Sciatic nerve (tissue), 2 donors: ENCODE measurements at regions of chr21 and their contacts with region 1.

Region 1: DNA sequence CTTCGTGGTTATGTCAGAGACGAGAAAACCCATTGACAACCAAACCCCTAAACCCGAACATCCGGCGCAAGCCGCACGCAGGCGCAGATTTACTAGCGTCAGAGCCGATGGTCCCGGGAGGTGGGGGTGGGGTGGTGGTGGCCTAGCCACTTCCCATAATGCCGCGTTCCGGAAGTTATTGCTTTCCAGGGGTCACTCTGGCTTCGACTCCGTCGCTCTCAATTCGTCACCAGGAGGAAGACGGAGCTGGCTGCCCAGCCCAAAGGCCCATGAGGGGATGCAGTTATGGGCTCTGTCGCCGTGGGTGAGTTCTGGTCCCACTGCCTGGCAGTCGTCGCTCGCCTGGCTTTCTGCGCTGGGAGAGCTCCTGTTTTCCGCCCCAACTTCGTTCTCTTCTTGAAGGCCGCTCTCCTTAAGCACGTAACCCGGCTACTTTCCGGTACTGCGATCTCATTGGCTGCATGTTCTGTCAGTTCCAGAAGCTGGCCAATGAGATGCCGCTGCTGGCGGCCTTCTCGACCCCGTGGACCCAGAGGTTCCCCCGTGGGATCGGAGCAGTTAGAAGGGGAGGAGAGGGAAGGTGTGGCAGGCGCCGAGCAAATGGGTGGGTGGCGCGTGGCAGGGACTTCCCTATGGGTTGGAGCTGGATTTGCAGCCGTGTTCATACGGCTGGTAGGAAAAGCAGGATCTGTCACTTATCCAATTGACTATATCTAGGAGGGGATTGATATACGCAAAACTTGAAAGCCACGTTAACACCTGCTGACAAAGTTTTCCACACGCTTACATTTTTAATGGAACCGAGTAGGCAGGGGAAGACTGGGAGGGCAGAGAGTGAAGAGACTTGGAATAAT is at the start of gene USP16:
- DNase-seq: peak; percentile 96
- ATAC-seq: peak; percentile 99
- total RNA-seq, gene USP16: 53.7 TPM

Region 2: DNA sequence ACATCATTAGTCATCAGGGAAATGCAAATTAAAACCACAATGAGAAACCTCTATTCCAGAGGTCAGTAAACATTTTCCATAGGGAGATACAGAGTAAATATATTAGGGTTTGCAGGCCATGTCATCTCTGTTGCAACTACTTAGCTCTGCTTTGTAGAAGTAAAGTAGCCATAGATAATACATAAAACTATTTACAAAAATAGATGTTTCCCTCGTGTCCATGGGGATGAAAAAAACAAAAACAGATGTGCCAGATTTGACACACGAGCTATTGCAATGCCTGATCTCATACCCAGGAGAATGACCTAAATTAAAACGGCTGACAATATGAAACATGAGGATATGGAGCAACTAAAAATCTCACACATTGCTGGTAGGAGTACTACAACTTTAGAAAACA is 49.3 kb before region 1 on chr21:
- intact Hi-C with region 1: no loop called
- DNase-seq: no peak
- ATAC-seq: peak; percentile 30

Region 3: GRCh38 chr21:29073222-29074006 is 48.7 kb after region 1 on chr21 and contains the start of gene CCT8:
- intact Hi-C with region 1: loop called (anchors 10 kb)
- DNase-seq: peak; percentile 99
- ATAC-seq: peak; percentile 99
- total RNA-seq, gene CCT8: 73.8 TPM